ENCODE measurements at regions of chr6 and their contacts with region 1.

Region 1: GRCh38 chr6:27893059-27893835 is 18.9 kb downstream of the OR2B2 start:
- DNase-seq: peak; percentile 95 to 96
- H3K4me3 ChIP-seq: peak overlapping the region; percentile 82
- H3K4me3 Mint-ChIP-seq: no peak overlapping the region
- H3K27ac Mint-ChIP-seq: no peak overlapping the region
- H3K4me1 ChIP-seq: peaks cover 21% of the 10 kb centered on the region
- H3K4me1 Mint-ChIP-seq: peaks cover 39% of the 10 kb centered on the region
- H3K27me3 ChIP-seq: no peaks in the 10 kb centered on the region
- H3K27me3 Mint-ChIP-seq: peaks cover 10% of the 10 kb centered on the region
- CTCF ChIP-seq: no peak

Region 2: GRCh38 chr6:26025894-26026832 is 1867.1 kb before region 1 on chr6:
- CTCF ChIA-PET with region 1: no interaction called
- POLR2A ChIA-PET with region 1: interaction called, 4 read pairs
- intact Hi-C with region 1: loop called (anchors 5 kb)
- DNase-seq: peak; percentile 94 to 95
- H3K4me3 ChIP-seq: peak overlapping the region; percentile 74
- H3K4me3 Mint-ChIP-seq: peak overlapping the region; percentile 85
- H3K27ac Mint-ChIP-seq: peak overlapping the region; percentile 100
- H3K4me1 ChIP-seq: peaks cover 18% of the 10 kb centered on the region; the same call in 1 of the 2 replicates
- H3K4me1 Mint-ChIP-seq: peaks cover 35% of the 10 kb centered on the region
- H3K27me3 ChIP-seq: no peaks in the 10 kb centered on the region
- H3K27me3 Mint-ChIP-seq: peaks cover 4% of the 10 kb centered on the region
- CTCF ChIP-seq: peak; percentile 81 to 87

Region 3: GRCh38 chr6:27132532-27133280 is 760.5 kb before region 1 on chr6:
- CTCF ChIA-PET with region 1: no interaction called
- POLR2A ChIA-PET with region 1: interaction called, 25 read pairs
- intact Hi-C with region 1: no loop called
- DNase-seq: peak; percentile 95 to 96
- H3K4me3 ChIP-seq: peak overlapping the region; percentile 70
- H3K4me3 Mint-ChIP-seq: no peak overlapping the region
- H3K27ac Mint-ChIP-seq: no peak overlapping the region
- H3K4me1 ChIP-seq: peaks cover 25% of the 10 kb centered on the region
- H3K4me1 Mint-ChIP-seq: peaks cover 6% of the 10 kb centered on the region
- H3K27me3 ChIP-seq: no peaks in the 10 kb centered on the region
- H3K27me3 Mint-ChIP-seq: no peaks in the 10 kb centered on the region
- CTCF ChIP-seq: no peak

Region 4: DNA sequence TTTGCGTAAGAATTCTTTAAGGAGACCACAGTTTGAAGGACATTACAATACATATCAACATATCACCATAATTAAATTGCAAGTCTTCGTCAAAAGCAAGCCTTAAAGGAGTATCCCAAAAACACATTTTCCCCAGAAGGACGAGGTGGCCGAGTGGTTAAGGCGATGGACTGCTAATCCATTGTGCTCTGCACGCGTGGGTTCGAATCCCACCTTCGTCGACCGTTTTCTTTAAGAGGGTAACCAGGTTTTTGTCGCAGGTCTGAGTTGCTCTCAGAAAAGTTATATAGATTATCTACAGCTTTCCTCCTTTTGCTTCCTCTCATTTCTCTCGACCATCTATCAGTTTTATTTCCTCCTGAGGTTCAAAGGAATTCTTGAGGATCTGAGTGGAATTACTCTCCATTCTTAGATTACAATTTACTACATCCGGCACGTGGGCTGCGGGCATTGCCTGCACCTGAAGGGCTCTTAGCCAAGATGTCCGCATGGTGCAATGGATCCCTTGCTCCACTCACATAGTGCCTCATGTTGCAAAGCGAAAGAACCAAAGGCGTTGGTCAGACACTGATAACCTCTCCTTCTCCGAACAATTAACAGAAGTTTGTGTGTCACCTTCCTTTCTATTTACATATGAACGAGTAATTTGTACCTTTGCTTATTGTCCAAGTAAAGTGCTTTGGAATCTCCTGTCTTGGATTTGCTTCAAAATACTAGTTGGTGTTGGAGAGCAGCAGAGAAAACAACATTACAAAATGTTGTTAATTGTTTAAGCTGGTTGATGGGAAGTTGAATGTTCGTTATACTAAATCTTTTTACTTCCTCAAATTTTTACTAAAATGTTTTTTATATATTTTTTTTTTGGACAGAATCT is 595.2 kb before region 1 on chr6:
- CTCF ChIA-PET with region 1: no interaction called
- POLR2A ChIA-PET with region 1: no interaction called
- intact Hi-C with region 1: no loop called
- DNase-seq: peak; percentile 67 to 71
- H3K4me3 ChIP-seq: 0 out of 2 replicates have a peak overlapping the region, but pooled peaks have one; percentile 5
- H3K4me3 Mint-ChIP-seq: peak overlapping the region; percentile 97
- H3K27ac Mint-ChIP-seq: peak overlapping the region; percentile 79
- H3K4me1 ChIP-seq: 0 out of 2 replicates have a peak, but pooled peaks cover 3% of the 10 kb centered on the region
- H3K4me1 Mint-ChIP-seq: peaks cover 16% of the 10 kb centered on the region
- H3K27me3 ChIP-seq: no peaks in the 10 kb centered on the region
- H3K27me3 Mint-ChIP-seq: peaks cover 7% of the 10 kb centered on the region
- CTCF ChIP-seq: no peak

Region 5: DNA sequence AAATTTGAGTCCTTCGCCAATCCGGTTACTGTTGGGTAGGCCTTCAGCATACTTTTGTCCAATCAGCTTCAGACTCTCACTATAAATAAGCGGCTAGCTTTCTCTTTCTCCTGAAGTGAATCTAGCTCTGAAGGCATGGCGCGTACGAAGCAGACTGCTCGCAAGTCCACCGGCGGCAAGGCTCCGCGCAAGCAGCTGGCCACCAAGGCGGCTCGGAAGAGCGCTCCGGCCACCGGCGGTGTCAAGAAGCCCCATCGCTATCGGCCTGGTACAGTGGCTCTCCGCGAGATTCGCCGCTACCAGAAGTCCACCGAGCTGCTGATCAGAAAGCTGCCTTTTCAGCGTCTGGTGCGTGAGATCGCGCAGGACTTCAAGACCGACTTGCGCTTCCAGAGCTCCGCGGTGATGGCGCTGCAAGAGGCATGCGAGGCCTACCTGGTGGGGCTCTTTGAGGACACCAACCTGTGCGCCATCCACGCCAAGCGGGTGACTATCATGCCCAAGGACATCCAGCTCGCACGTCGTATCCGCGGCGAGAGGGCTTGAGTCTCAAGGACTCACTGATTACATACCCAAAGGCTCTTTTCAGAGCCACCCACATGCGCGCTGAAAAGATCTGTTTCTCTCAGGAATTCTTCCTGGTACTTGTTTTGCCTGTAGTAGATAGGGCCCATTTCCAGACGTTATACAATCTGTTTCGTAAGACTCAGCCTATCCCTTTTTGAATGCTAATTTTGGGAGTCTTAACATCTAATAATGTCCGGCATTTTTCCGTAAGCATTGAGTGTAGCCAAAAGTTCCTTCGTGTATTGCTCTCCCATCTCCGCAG is 83.1 kb before region 1 on chr6:
- CTCF ChIA-PET with region 1: interaction called, 4 read pairs
- POLR2A ChIA-PET with region 1: interaction called, 114 read pairs
- intact Hi-C with region 1: loop called (anchors 2 kb)
- DNase-seq: peak; percentile 87 to 91
- H3K4me3 ChIP-seq: peak overlapping the region; percentile 78
- H3K4me3 Mint-ChIP-seq: peak overlapping the region; percentile 87
- H3K27ac Mint-ChIP-seq: peak overlapping the region; percentile 97
- H3K4me1 ChIP-seq: peaks cover 28% of the 10 kb centered on the region
- H3K4me1 Mint-ChIP-seq: peaks cover 32% of the 10 kb centered on the region
- H3K27me3 ChIP-seq: no peaks in the 10 kb centered on the region
- H3K27me3 Mint-ChIP-seq: no peaks in the 10 kb centered on the region
- CTCF ChIP-seq: no peak

Region 6: GRCh38 chr6:27838058-27838944 is 54.9 kb before region 1 on chr6:
- CTCF ChIA-PET with region 1: interaction called, 11 read pairs
- POLR2A ChIA-PET with region 1: interaction called, 334 read pairs
- intact Hi-C with region 1: loop called (anchors 1 kb)
- DNase-seq: peak; percentile 91 to 92
- H3K4me3 ChIP-seq: peak overlapping the region; percentile 77
- H3K4me3 Mint-ChIP-seq: no peak overlapping the region
- H3K27ac Mint-ChIP-seq: no peak overlapping the region
- H3K4me1 ChIP-seq: peaks cover 14% of the 10 kb centered on the region; the same call in 1 of the 2 replicates
- H3K4me1 Mint-ChIP-seq: peaks cover 21% of the 10 kb centered on the region
- H3K27me3 ChIP-seq: no peaks in the 10 kb centered on the region
- H3K27me3 Mint-ChIP-seq: no peaks in the 10 kb centered on the region
- CTCF ChIP-seq: no peak

Region 7: DNA sequence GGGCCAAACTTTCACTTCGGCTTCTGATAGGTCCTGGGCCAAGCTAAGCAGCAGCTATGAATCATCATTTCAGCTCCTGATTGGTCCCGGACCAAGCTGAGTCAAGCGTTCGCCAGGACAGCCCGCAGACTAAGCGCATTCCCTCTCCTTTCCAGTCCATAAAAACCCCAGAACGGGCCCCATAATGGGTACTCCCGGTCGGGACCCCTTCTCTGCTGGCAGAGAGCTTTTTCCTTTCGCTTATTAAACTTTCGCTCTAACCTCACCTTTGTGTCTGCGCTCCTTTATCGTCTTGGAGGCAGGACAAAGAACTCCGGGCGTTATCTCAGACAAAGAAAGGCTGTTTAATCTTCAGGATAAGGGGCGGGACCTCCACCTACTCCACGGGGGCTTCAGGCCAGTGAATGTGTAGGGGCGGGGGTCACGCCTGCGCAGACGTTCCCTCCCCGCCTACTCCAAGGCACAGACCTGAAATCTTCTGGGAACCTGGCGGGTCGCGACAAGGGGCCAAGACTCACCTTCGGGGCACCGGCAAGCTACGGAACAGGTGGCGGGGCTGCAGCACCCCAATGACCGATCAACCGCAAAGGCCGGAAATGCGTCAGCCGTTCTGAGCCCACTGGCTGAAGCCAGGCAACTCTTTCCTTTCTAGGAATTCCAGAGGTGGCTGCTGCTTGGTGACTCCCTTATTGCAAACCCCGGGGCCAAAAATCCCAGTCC is 442.5 kb after region 1 on chr6 and contains the start of gene ZSCAN31:
- CTCF ChIA-PET with region 1: no interaction called
- POLR2A ChIA-PET with region 1: interaction called, 3 read pairs
- intact Hi-C with region 1: loop called (anchors 5 kb)
- DNase-seq: peak; percentile 92 to 95
- H3K4me3 ChIP-seq: peak within 1 kb of the TSS; percentile 54
- H3K4me3 Mint-ChIP-seq: no peak within 1 kb of the TSS
- H3K27ac Mint-ChIP-seq: no peak within 1 kb of the TSS
- H3K4me1 ChIP-seq: no peaks in the 10 kb centered on the region; the same call in 1 of the 2 replicates
- H3K4me1 Mint-ChIP-seq: peaks cover 16% of the 10 kb centered on the region
- H3K27me3 ChIP-seq: no peaks in the 10 kb centered on the region
- H3K27me3 Mint-ChIP-seq: peaks cover 2% of the 10 kb centered on the region
- CTCF ChIP-seq: no peak
- total RNA-seq, gene ZSCAN31: 1.7 and 3.4 TPM in 2 replicates